Caco-2 (cell line): ENCODE measurements at regions of chr12 and their contacts with region 1.

Region 1: DNA sequence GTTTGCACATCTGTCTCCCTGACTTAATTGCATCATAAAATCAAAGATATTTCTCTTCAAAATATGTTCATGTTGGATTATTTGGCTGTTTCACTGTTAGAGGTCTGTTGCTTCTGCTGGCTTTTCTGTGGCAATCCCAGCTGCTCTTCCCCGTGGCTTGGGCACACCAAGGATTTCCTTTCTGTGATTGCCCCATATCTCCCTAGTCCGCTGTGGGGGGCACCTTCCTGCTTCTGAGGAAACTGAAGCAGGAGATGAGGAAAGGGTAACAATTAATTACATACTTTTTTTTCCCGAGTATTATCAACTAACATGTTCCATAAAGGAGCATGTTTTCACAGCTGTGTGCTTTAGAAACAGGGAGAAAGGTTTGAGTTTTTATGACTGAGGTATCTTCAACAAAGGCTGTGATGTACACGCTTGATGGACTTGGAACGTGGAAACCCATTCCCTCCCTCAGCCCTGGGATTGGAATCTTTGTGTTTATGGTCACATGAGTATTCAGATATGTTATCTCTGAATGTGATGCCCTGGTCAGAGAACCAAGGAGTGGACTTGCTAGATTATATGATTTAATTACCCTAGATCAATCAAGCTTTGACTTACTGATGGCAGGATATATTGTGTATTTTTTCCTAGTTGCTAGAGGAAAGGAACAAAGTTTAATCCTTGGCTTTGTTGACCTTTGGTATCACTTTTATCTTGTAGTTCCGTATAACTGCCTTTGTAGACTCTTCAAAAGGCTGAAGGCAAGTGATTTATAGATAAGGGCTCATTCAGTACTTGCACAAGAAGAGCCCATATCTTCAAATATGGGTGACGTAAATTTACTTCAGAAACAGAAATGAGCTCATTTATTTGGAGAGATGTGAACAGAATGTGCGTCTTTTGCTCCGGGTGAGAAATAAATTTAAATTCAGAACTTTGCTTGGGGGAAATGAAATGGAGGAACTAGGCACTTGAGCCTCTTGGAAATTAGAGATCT is 46.7 kb downstream of the BORCS5 start:
- DNase-seq: peak; percentile 96 to 97
- H3K4me3 ChIP-seq: no peak overlapping the region
- H3K4me3 Mint-ChIP-seq: peak overlapping the region; percentile 54
- H3K27ac Mint-ChIP-seq: peak overlapping the region; percentile 94
- H3K4me1 ChIP-seq: peaks cover 61% of the 10 kb centered on the region
- H3K4me1 Mint-ChIP-seq: peaks cover 60% of the 10 kb centered on the region
- H3K27me3 ChIP-seq: no peaks in the 10 kb centered on the region
- H3K27me3 Mint-ChIP-seq: no peaks in the 10 kb centered on the region
- CTCF ChIP-seq: no peak

Region 2: DNA sequence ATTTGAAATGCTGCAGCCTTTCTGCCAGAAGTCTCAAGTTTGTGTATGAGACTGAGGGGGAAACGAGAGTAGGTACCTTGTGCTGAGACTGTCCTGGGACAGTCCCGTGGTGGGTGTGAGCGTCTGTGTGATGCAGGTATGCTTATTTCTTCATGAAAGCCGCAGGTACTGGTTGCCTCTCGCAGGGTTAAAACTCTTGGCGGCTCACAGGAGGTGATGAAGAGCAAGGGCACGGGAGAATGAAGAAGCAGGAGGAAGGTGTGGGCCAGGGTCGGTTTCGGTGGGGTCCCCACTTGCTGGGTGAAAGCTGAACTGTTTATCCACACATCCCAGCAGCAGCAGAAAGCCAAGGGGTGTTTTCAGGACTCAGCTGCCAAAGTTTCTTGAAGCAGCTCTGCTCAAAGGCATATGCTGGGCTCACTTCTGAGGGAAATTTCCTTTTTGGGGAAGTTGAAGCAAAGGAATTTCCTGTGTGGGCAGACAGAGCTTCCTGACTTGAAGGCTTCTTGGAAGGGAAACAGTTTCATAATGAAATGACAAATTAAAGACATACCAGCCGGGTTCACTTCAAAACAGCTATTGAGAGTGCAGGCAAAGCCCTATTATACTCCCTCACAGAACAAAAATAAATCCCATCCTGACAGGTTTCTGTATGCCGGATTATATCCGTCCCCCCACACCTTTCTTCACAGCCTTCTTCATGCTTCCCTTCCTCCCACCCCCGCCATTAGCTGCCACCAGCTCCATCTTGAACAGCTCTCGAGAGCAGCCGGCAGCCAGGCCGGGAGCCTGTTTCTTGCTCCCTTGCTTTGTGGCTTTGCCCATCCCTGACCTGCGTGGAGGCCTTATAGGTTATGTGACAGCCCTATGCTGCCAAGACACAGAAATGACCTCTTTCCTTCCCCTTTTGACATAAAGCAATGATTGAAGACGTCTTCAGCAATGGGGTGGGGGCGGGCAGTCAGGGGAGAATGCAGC is 637.5 kb before region 1 on chr12:
- CTCF ChIA-PET with region 1: no interaction called
- POLR2A ChIA-PET with region 1: no interaction called
- intact Hi-C with region 1: no loop called
- DNase-seq: no peak
- H3K4me3 ChIP-seq: no peak overlapping the region
- H3K4me3 Mint-ChIP-seq: no peak overlapping the region
- H3K27ac Mint-ChIP-seq: no peak overlapping the region
- H3K4me1 ChIP-seq: peaks cover 25% of the 10 kb centered on the region
- H3K4me1 Mint-ChIP-seq: peaks cover 13% of the 10 kb centered on the region
- H3K27me3 ChIP-seq: no peaks in the 10 kb centered on the region
- H3K27me3 Mint-ChIP-seq: no peaks in the 10 kb centered on the region
- CTCF ChIP-seq: no peak

Region 3: DNA sequence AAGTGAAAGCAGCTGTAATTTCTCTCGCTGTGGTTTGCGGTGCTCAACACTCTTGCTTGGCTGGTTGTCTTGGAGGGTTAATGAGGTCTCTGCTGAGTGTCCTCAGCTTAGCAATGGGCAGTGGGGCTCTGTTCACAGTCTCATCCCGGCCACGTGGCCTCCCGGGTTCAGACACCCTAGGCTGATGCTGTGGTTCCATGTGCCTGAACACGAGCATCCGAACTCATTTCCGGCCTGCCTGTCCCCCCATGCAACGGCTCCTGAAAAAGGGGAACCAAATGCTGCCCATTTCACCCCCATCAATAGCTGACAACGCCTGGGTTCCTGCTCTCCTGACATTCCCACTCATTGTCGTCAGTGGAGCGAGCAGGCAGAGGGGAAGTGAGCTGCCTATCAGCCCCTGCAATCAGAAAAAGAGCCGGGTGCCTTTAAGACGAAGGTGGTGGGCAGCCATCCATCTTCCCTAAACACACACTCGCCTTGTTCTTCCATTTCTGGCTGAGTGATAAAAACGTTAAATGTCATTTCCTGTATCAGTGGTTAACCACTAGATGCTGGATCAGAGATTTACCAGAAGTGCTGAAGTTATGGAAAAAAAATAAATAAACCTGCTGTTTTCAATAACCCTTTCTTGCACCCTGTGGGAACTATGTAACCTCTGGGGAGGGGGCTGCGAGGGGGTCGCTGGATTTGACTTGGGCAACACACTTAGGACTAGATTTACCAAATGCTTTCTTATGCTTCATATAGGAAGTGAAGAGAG is 393.1 kb before region 1 on chr12:
- CTCF ChIA-PET with region 1: no interaction called
- POLR2A ChIA-PET with region 1: no interaction called
- intact Hi-C with region 1: no loop called
- DNase-seq: no peak
- H3K4me3 ChIP-seq: no peak overlapping the region
- H3K4me3 Mint-ChIP-seq: no peak overlapping the region
- H3K27ac Mint-ChIP-seq: no peak overlapping the region
- H3K4me1 ChIP-seq: no peaks in the 10 kb centered on the region
- H3K4me1 Mint-ChIP-seq: no peaks in the 10 kb centered on the region
- H3K27me3 ChIP-seq: no peaks in the 10 kb centered on the region
- H3K27me3 Mint-ChIP-seq: no peaks in the 10 kb centered on the region
- CTCF ChIP-seq: no peak

Region 4: DNA sequence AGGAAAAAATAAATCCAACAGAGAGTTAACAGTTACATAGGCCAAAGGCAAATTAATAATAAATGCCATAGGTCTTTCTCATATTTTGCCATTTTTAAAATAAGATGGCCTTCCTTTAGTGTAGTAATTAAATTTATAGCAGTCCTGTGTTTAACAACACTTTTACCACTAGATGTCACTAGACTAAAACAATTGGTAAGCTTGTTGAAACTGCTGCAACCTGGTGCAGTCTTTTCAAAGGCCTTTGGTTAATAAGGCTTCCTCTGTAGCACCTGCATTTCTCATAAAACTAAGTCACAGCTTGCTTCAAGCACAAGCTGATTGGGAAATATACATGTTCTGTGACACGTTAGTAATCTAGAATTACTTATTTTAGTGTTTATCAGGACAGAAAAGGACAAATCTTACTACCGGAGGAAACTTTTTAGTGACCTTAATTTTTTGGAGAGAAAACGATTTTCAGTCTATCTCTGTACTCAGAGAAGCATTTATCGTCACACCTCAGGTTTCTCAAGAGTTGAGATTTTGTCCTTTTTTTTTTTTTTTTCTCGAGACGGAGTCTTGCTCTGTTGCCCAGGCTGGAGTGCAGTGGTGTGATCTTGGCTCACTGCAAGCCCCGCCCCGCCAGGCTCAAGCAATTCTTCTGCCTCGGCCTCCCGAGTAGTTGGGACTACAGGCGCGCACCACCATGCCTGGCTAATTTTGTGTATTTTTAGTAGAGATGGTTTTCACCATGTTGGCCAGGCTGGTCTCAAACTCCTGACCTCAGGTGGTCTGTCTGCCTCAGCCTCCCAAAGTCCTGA is 26.7 kb before region 1 on chr12:
- CTCF ChIA-PET with region 1: interaction called, 11 read pairs
- POLR2A ChIA-PET with region 1: no interaction called
- intact Hi-C with region 1: loop called (anchors 1 kb)
- DNase-seq: peak; percentile 64 to 71
- H3K4me3 ChIP-seq: no peak overlapping the region
- H3K4me3 Mint-ChIP-seq: no peak overlapping the region
- H3K27ac Mint-ChIP-seq: no peak overlapping the region
- H3K4me1 ChIP-seq: peaks cover 34% of the 10 kb centered on the region
- H3K4me1 Mint-ChIP-seq: peaks cover 38% of the 10 kb centered on the region
- H3K27me3 ChIP-seq: no peaks in the 10 kb centered on the region
- H3K27me3 Mint-ChIP-seq: no peaks in the 10 kb centered on the region
- CTCF ChIP-seq: peak; percentile 72 to 96

Region 5: GRCh38 chr12:12415886-12416285 is 12.3 kb after region 1 on chr12:
- CTCF ChIA-PET with region 1: no interaction called
- POLR2A ChIA-PET with region 1: no interaction called
- intact Hi-C with region 1: no loop called
- DNase-seq: no peak
- H3K4me3 ChIP-seq: no peak overlapping the region
- H3K4me3 Mint-ChIP-seq: no peak overlapping the region
- H3K27ac Mint-ChIP-seq: peak overlapping the region; percentile 9
- H3K4me1 ChIP-seq: peaks cover 6% of the 10 kb centered on the region; the same call in 1 of the 2 replicates
- H3K4me1 Mint-ChIP-seq: peaks cover 8% of the 10 kb centered on the region
- H3K27me3 ChIP-seq: no peaks in the 10 kb centered on the region
- H3K27me3 Mint-ChIP-seq: no peaks in the 10 kb centered on the region
- CTCF ChIP-seq: no peak

Region 6: DNA sequence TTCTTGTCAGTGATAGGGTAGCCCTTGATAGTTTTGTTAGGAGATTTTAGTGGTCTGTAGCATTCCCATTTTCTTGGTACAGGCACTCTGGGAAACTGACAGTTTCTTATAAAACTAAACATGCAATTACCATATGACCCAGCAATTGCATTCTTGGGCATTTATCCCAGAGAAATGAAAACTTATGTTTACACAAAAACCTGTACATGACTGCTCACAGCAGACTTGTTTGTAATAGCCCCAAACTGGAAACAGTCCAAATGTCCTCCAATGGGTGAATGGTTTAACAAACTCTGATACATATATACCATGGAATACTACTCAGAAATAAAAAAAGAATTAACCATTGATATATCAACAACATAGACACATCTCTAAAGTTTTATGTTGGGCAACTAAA is 28.8 kb after region 1 on chr12:
- CTCF ChIA-PET with region 1: interaction called, 3 read pairs
- POLR2A ChIA-PET with region 1: interaction called, 11 read pairs
- intact Hi-C with region 1: loop called (anchors 2 kb)
- DNase-seq: no peak
- H3K4me3 ChIP-seq: no peak overlapping the region
- H3K4me3 Mint-ChIP-seq: no peak overlapping the region
- H3K27ac Mint-ChIP-seq: peak overlapping the region; percentile 6
- H3K4me1 ChIP-seq: peaks cover 26% of the 10 kb centered on the region
- H3K4me1 Mint-ChIP-seq: peaks cover 60% of the 10 kb centered on the region
- H3K27me3 ChIP-seq: no peaks in the 10 kb centered on the region
- H3K27me3 Mint-ChIP-seq: no peaks in the 10 kb centered on the region
- CTCF ChIP-seq: no peak

Region 7: GRCh38 chr12:12495536-12495935 is 92.0 kb after region 1 on chr12:
- CTCF ChIA-PET with region 1: no interaction called
- POLR2A ChIA-PET with region 1: no interaction called
- intact Hi-C with region 1: no loop called
- DNase-seq: no peak
- H3K4me3 ChIP-seq: no peak overlapping the region
- H3K4me3 Mint-ChIP-seq: no peak overlapping the region
- H3K27ac Mint-ChIP-seq: no peak overlapping the region
- H3K4me1 ChIP-seq: peaks cover 14% of the 10 kb centered on the region
- H3K4me1 Mint-ChIP-seq: peaks cover 7% of the 10 kb centered on the region
- H3K27me3 ChIP-seq: no peaks in the 10 kb centered on the region
- H3K27me3 Mint-ChIP-seq: no peaks in the 10 kb centered on the region
- CTCF ChIP-seq: no peak

Region 8: GRCh38 chr12:12505544-12506495 is 102.3 kb after region 1 on chr12:
- CTCF ChIA-PET with region 1: interaction called, 9 read pairs
- POLR2A ChIA-PET with region 1: no interaction called
- intact Hi-C with region 1: loop called (anchors 5 kb)
- DNase-seq: peak in 1 of 2 experiments; percentile 36
- H3K4me3 ChIP-seq: no peak overlapping the region
- H3K4me3 Mint-ChIP-seq: peak overlapping the region; percentile 42
- H3K27ac Mint-ChIP-seq: peak overlapping the region; percentile 19
- H3K4me1 ChIP-seq: peaks cover 37% of the 10 kb centered on the region
- H3K4me1 Mint-ChIP-seq: peaks cover 40% of the 10 kb centered on the region
- H3K27me3 ChIP-seq: no peaks in the 10 kb centered on the region
- H3K27me3 Mint-ChIP-seq: no peaks in the 10 kb centered on the region
- CTCF ChIP-seq: no peak

Region 9: GRCh38 chr12:12883369-12884001 is 479.9 kb after region 1 on chr12:
- CTCF ChIA-PET with region 1: no interaction called
- POLR2A ChIA-PET with region 1: no interaction called
- intact Hi-C with region 1: loop called (anchors 2 kb)
- DNase-seq: peak; percentile 88 to 90
- H3K4me3 ChIP-seq: no peak overlapping the region
- H3K4me3 Mint-ChIP-seq: peak overlapping the region; percentile 70
- H3K27ac Mint-ChIP-seq: peak overlapping the region; percentile 88
- H3K4me1 ChIP-seq: peaks cover 61% of the 10 kb centered on the region
- H3K4me1 Mint-ChIP-seq: peaks cover 80% of the 10 kb centered on the region
- H3K27me3 ChIP-seq: no peaks in the 10 kb centered on the region
- H3K27me3 Mint-ChIP-seq: no peaks in the 10 kb centered on the region
- CTCF ChIP-seq: no peak